ENCODE measurements at regions of chr3 and their contacts with region 1.

Region 1: DNA sequence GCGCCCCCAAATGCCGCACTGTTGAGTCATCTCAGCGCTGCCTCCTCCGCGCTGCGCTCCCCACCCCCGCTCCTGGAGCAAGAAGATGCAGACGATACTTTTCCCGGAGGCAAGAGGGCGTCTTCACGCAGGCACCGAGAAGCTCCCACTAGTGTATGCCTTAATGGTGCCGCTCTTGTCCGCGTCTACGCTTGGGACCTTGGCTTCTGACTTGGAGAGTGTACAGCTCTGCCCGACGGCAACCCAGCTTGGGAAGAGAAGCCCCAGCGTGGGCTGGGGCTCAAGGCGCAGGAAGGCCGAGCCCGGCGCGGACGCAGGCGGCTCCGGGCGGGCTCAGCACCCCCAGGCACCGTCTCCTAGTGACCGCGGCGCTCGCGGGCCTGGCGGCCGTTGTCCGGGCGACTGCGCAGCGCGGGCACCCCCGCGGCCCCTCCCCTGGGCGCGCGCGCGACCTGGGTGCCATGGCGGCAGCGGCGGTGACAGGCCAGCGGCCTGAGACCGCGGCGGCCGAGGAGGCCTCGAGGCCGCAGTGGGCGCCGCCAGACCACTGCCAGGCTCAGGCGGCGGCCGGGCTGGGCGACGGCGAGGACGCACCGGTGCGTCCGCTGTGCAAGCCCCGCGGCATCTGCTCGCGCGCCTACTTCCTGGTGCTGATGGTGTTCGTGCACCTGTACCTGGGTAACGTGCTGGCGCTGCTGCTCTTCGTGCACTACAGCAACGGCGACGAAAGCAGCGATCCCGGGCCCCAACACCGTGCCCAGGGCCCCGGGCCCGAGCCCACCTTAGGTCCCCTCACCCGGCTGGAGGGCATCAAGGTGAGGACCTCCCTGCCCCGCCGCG is at the start of gene P4HTM:
- DNase-seq: peak; percentile 76
- H3K4me3 ChIP-seq: peak within 1 kb of the TSS; percentile 37 to 66 (median 61)
- H3K27ac ChIP-seq: peak within 1 kb of the TSS; percentile 38
- H3K4me1 ChIP-seq: peaks cover 30% of the 10 kb centered on the region
- H3K27me3 ChIP-seq: no peaks in the 10 kb centered on the region
- CTCF ChIP-seq: peak in 1 of 2 donors; percentile 33
- total RNA-seq, gene P4HTM: 8.1 to 10.2 TPM

Region 2: DNA sequence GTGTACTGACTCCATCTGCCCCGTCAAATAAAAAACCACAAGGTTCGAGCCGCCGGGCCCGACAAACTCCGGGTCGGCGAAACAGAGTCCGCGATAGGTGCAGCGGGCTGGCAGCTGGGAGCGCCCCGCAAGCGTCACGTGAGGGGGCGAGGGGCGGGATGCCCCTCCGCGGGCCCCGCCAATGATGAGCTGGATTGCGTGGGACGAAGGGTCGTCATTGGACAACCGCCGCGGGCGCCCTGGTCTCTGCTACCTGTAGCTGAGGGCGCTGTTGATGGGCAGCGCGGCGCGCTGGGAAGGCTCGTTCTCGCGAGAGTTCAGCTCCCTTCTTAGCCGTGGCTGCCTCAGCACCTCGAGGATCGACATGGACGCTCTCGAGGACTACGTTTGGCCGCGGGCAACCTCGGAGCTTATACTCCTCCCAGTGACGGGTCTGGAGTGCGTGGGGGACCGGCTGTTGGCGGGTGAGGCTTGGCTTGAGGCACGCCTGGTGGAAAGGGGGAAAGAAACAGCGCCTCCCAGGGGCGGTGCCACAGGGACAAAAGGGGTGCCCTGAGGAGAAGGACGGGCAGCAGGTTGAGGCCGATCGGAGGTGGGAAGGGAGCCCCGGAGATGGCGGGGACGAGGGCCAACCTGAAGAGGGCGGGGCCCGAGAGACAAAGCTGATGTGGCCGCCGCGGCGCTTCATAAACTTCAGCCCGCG is 17.2 kb after region 1 on chr3 and contains the start of gene WDR6:
- CTCF ChIA-PET with region 1: interaction called, 12 read pairs
- dilution Hi-C with region 1: no loop called
- in situ Hi-C with region 1: no loop called
- intact Hi-C with region 1: loop called (anchors 1 kb)
- DNase-seq: peak; percentile 98
- H3K4me3 ChIP-seq: peak within 1 kb of the TSS; percentile 56 to 84 (median 76)
- H3K27ac ChIP-seq: peak within 1 kb of the TSS; percentile 67
- H3K4me1 ChIP-seq: peaks cover 15% of the 10 kb centered on the region
- H3K27me3 ChIP-seq: no peaks in the 10 kb centered on the region
- CTCF ChIP-seq: peak; percentile 18 to 53
- total RNA-seq, gene WDR6: 91.2 to 108 TPM

Region 3: DNA sequence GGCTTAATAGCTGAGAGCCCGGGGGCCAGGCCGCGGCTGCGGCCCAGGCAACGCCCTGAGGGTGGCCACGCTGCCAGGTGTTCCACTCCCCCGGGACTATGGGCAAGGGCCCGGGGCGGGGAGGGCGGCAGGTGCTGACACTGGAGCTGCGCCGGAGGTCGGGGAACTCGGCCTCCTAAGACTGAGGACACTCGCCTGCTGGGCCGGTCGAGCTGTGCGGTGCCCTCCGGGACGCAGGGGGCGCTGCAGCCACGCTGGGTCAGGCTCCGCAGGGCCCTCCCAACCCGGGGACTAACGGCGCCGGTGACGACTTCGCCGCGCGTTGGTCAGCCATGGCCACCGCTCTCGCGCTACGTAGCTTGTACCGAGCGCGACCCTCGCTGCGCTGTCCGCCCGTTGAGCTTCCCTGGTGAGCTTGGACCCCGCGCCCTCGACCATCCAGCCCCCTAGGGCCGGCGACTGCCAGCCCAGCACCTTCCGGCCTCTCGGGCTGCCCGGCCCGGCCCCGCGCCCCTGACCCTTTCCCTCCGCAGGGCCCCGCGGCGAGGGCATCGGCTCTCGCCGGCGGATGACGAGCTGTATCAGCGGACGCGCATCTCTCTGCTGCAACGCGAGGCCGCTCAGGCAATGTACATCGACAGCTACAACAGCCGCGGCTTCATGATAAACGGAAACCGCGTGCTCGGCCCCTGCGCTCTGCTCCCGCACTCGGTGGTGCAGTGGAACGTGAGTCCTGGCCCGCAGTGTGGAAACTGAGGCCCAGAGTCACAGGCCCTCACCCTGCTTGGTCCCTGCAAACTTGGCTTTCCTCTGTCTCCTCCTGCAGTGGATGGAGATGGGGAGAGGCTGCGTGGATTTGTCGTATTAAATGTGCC is 32.0 kb after region 1 on chr3 and contains the start of gene NDUFAF3:
- CTCF ChIA-PET with region 1: interaction called, 4 read pairs
- dilution Hi-C with region 1: no loop called
- in situ Hi-C with region 1: no loop called
- intact Hi-C with region 1: loop called (anchors 2 kb)
- DNase-seq: peak; percentile 95
- H3K4me3 ChIP-seq: peak within 1 kb of the TSS; percentile 65 to 89 (median 86)
- H3K27ac ChIP-seq: peak within 1 kb of the TSS; percentile 89
- H3K4me1 ChIP-seq: peaks cover 34% of the 10 kb centered on the region
- H3K27me3 ChIP-seq: no peaks in the 10 kb centered on the region
- CTCF ChIP-seq: peak; percentile 75 to 97
- total RNA-seq, gene NDUFAF3: 27.0 to 83.6 TPM

Region 4: DNA sequence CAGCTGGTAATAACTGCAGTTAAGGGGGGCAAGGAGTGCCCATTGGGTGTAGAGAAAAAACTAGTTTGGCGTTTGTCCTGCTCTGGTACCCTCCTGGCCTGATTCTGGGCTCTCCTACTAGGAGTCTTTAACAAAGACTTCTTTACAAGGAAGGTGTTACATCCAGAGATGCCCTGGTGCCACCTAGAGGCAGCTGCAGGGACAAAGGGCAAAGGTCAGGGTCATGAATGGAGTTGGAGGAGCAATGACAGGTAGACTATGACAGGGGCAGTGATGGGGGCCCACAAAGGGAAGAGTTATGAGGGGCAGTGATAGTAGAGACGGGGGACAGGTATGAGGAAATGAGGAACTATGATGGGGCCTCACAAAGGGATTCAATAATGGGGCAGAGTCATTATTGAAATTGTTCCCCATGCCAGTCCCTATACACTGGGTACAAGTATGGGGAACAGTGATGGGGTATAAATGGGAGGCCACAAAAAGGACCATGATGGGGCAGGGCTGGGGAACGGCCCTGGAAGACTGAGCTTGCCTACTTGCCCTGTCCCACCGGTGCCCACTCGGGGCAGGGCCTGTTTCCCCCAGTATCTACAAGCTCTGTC is 168.2 kb after region 1 on chr3:
- CTCF ChIA-PET with region 1: no interaction called
- dilution Hi-C with region 1: no loop called
- in situ Hi-C with region 1: no loop called
- intact Hi-C with region 1: loop called (anchors 1 kb)
- DNase-seq: no peak
- H3K4me3 ChIP-seq: no peak overlapping the region
- H3K27ac ChIP-seq: no peak overlapping the region
- H3K4me1 ChIP-seq: no peaks in the 10 kb centered on the region
- H3K27me3 ChIP-seq: no peaks in the 10 kb centered on the region
- CTCF ChIP-seq: peak; percentile 34 to 56

Region 5: GRCh38 chr3:49199239-49199899 is 209.4 kb after region 1 on chr3:
- CTCF ChIA-PET with region 1: no interaction called
- dilution Hi-C with region 1: no loop called
- in situ Hi-C with region 1: no loop called
- intact Hi-C with region 1: no loop called
- DNase-seq: peak; percentile 7
- H3K4me3 ChIP-seq: peak overlapping the region in 1 of 3 experiments; percentile 11
- H3K27ac ChIP-seq: no peak overlapping the region
- H3K4me1 ChIP-seq: peaks cover 6% of the 10 kb centered on the region
- H3K27me3 ChIP-seq: no peaks in the 10 kb centered on the region
- CTCF ChIP-seq: no peak

Region 6: DNA sequence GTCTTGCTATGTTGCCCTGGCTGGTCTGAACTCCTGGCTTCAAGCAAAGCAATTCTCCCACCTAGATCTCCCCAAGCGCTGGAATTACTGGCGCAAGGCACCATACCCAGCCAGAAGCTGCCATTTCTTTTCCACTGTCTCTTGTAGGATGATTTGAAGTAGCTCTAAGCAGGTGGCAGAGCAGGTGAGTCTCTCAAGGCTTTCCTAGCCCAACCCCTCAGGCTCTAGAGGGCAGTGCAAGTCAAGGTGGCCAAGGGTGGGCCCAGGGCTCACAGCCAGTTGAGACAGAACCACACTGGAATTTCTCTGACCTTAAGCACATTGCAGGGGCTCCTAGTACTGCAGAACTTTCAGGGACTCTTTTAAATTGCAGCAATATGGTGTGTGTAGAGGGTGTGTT is 464.4 kb after region 1 on chr3:
- CTCF ChIA-PET with region 1: no interaction called
- dilution Hi-C with region 1: no loop called
- in situ Hi-C with region 1: no loop called
- intact Hi-C with region 1: loop called (anchors 2 kb)
- DNase-seq: peak; percentile 47
- H3K4me3 ChIP-seq: no peak overlapping the region
- H3K27ac ChIP-seq: no peak overlapping the region
- H3K4me1 ChIP-seq: peaks cover 16% of the 10 kb centered on the region
- H3K27me3 ChIP-seq: no peaks in the 10 kb centered on the region
- CTCF ChIP-seq: peak; percentile 45 to 55

Measured in mammary epithelial cell (primary cell).